ENCODE measurements at regions of chrX and their contacts with region 1.

Region 1: GRCh38 chrX:12771445-12772069 is 19.7 kb upstream of the PRPS2 start:
- DNase-seq: peak; percentile 78
- H3K4me3 Mint-ChIP-seq: no peak overlapping the region
- H3K27ac Mint-ChIP-seq: no peak overlapping the region
- H3K4me1 Mint-ChIP-seq: peaks cover 2% of the 10 kb centered on the region
- H3K27me3 Mint-ChIP-seq: peaks cover 14% of the 10 kb centered on the region

Region 2: DNA sequence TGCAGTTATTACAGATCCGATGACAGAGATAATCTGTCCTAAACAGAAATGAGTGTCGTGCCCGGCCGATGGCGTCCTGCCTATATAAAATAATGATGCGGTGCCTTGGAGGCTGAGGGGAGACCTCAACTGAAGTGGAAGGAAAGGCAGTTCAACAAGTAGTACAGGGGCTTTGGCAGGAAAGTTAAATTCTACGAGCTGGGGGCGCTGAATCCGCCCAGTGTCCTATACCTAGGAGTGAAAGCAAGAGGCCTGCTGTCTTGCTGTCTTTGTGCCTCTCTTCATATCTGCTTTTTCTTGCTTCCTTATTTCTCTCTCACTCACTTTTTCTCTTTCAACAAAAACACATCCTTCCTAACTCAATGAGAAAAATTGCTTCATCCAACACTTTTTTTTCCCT is 62.5 kb before region 1 on chrX:
- CTCF ChIA-PET with region 1: interaction called, 4 read pairs
- POLR2A ChIA-PET with region 1: no interaction called
- intact Hi-C with region 1: loop called (anchors 1 kb)
- DNase-seq: peak; percentile 36
- H3K4me3 Mint-ChIP-seq: no peak overlapping the region
- H3K27ac Mint-ChIP-seq: no peak overlapping the region
- H3K4me1 Mint-ChIP-seq: no peaks in the 10 kb centered on the region
- H3K27me3 Mint-ChIP-seq: no peaks in the 10 kb centered on the region

Region 3: DNA sequence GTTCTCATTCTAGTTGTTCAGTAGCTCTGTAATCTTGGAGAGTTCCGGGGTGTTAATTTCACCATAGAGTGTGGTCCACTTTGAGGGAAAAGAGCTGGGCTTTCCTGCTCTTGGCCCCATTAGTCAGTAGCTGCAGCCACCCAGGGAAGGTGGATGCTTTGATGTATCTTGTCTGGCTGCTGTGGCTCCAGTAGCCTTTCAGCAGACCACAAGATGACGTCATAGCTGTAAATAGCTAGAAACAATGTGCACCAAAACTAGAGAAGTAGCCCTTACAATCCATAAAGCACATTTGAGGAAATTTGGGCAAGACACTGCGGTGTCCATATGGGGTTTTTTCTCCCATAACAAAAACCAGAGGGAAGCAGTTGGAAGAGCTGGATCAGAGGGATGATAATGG is 13.3 kb before region 1 on chrX:
- CTCF ChIA-PET with region 1: interaction called, 18 read pairs
- POLR2A ChIA-PET with region 1: no interaction called
- intact Hi-C with region 1: no loop called
- DNase-seq: no peak
- H3K4me3 Mint-ChIP-seq: no peak overlapping the region
- H3K27ac Mint-ChIP-seq: no peak overlapping the region
- H3K4me1 Mint-ChIP-seq: no peaks in the 10 kb centered on the region
- H3K27me3 Mint-ChIP-seq: no peaks in the 10 kb centered on the region

Region 4: DNA sequence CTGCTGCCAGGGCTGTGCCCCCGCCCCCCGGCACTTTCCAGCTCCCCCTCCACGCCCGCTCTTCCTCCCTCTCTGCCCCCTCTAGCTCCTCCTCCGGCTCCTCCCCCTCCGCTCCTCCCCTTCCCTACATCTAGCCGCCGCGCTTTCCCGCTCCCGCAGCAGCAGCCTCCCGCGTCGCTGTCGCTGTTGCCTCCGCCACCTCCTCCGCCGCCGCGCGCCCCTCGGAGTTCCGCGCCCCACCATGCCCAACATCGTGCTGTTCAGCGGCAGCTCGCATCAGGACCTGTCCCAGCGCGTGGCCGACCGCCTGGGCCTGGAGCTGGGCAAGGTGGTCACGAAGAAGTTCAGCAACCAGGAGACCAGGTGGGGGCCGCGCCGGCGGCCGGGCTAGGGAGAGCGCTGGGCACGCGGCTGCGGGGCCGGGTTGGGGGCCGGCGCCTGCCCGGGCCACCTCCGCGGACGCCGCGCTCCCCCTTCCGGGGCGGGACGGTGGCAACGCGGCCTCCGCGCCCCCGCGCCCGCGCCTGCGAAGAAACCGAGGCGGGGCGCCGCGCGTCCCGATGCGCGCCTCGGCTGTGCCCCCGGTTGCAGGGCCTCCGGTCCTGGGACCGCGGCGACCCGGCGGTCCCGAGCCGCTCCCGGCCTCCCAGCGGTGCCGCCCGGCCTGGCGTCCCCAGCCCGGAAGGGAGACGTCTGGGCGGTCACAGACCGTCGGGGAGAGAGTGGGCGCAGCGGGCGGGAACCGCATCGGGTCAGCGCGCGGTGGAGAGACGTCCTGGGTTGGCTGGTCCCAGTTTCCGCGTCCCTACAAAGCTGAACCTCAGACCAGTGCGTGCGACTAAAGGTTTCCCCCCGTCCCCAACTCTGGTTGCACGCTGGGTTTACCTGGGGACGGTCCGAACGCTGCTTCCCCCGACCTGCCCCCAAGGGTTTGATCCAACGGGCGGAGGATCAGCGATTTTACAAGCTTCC is 20.0 kb after region 1 on chrX and contains the start of gene PRPS2:
- CTCF ChIA-PET with region 1: interaction called, 45 read pairs
- POLR2A ChIA-PET with region 1: no interaction called
- intact Hi-C with region 1: no loop called
- DNase-seq: peak; percentile 81
- H3K4me3 Mint-ChIP-seq: peak within 1 kb of the TSS; percentile 84
- H3K27ac Mint-ChIP-seq: peak within 1 kb of the TSS; percentile 83
- H3K4me1 Mint-ChIP-seq: peaks cover 26% of the 10 kb centered on the region
- H3K27me3 Mint-ChIP-seq: no peaks in the 10 kb centered on the region
- total RNA-seq, gene PRPS2: 104 to 105 TPM

Region 5: GRCh38 chrX:12894074-12895030 is 122.8 kb after region 1 on chrX:
- CTCF ChIA-PET with region 1: no interaction called
- POLR2A ChIA-PET with region 1: no interaction called
- intact Hi-C with region 1: loop called (anchors 2 kb)
- DNase-seq: peak; percentile 51
- H3K4me3 Mint-ChIP-seq: no peak overlapping the region
- H3K27ac Mint-ChIP-seq: no peak overlapping the region
- H3K4me1 Mint-ChIP-seq: peaks cover 18% of the 10 kb centered on the region
- H3K27me3 Mint-ChIP-seq: no peaks in the 10 kb centered on the region

Region 6: DNA sequence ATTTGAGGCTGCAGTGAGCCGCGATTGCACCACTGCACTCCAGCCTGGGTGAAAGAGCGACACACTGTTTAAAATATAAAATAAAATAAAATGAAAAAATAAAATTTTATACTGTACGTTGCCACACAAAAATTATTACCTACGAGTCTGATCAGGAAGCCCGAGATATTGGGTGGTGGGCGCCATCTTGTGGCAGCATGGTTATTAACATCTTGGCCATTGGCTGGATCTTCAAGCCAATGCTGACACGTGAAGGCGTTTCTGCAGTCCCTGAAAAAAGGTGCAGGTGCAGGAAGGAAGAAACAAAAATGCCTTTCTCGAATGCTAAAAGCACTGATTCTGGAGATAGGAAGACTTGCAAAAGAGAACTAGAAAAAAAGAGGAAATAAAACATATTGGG is 129.9 kb after region 1 on chrX:
- CTCF ChIA-PET with region 1: interaction called, 10 read pairs
- POLR2A ChIA-PET with region 1: no interaction called
- intact Hi-C with region 1: no loop called
- DNase-seq: peak; percentile 73
- H3K4me3 Mint-ChIP-seq: no peak overlapping the region
- H3K27ac Mint-ChIP-seq: no peak overlapping the region
- H3K4me1 Mint-ChIP-seq: peaks cover 2% of the 10 kb centered on the region
- H3K27me3 Mint-ChIP-seq: no peaks in the 10 kb centered on the region

Measured in activated CD4-positive, alpha-beta memory T cell treated with anti-CD3 and anti-CD28 coated beads for 36 hours (primary cell).